HAP-1 (cell line): ENCODE measurements at regions of chr16 and their contacts with region 1.

Region 1: DNA sequence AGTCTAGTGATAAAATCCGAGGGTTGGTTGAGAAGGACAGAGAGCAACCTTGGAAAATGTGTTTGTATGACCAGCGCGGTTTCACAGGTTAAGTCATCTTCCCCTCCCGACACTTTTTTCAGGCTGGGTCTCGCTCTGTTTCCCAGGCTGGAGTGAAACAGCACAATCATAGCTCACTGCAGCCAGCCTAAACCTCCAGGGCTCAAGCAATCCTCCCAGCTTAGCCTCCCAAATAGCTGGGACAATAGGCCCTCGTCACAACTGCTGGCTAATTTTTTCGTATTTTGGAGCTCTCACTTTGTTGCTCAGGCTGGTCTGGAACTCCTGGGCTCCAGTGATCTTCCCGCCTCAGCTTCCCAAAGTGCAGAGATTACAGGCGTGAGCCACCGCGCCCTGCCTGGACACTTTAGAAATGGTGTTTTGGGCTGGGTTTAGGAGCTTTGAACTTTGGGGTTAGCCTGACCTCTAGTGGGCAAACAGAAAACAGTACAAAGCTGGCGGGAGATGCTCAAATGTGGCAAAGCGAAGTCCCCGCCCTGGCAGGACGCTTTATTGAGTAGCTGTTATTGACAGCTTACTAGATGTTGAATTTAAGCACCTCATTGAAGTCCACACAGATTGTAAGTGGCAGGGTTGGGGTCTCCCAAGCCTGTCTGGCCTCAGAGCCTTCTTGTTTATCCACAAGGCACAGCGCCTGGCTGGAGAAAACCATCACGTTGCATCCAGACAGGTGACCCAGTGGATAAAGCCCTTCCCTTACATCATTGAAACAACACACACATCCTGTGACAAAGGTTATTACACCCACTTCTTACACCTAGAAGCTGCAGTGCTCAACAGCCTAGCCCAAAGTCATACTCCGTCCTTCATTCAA is 34.7 kb upstream of the RBBP6 start:
- DNase-seq: peak; percentile 69 to 76
- H3K4me3 ChIP-seq: no peak overlapping the region
- H3K4me1 ChIP-seq: no peaks in the 10 kb centered on the region; the same call in 1 of the 2 replicates
- H3K27me3 ChIP-seq: no peaks in the 10 kb centered on the region; the same call in 1 of the 2 replicates

Region 2: GRCh38 chr16:23803591-23804123 is 701.1 kb before region 1 on chr16:
- in situ Hi-C with region 1: loop called (anchors 10 kb)
- DNase-seq: peak; percentile 39 to 67
- H3K4me3 ChIP-seq: no peak overlapping the region
- H3K4me1 ChIP-seq: no peaks in the 10 kb centered on the region
- H3K27me3 ChIP-seq: no peaks in the 10 kb centered on the region

Region 3: DNA sequence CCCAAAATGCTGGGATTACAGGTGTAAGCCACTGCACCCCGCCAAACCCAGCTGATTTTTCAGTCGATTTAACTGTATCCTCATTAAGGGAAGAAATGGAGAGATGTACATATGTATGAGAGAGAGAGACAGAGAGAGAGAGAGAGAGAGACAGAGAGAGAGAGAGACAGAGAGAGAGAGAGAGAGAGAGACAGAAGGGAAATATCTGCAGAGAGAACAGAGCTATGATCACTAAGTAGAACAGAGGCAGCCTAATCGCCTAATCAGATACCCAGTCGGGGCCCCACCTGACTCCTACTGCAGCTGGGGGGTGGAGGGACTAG is 104.7 kb after region 1 on chr16:
- in situ Hi-C with region 1: no loop called
- DNase-seq: no peak
- H3K4me3 ChIP-seq: peak overlapping the region; percentile 20
- H3K4me1 ChIP-seq: peaks cover 12% of the 10 kb centered on the region
- H3K27me3 ChIP-seq: no peaks in the 10 kb centered on the region